ENCODE measurements at regions of chr13 and their contacts with region 1.

Region 1: DNA sequence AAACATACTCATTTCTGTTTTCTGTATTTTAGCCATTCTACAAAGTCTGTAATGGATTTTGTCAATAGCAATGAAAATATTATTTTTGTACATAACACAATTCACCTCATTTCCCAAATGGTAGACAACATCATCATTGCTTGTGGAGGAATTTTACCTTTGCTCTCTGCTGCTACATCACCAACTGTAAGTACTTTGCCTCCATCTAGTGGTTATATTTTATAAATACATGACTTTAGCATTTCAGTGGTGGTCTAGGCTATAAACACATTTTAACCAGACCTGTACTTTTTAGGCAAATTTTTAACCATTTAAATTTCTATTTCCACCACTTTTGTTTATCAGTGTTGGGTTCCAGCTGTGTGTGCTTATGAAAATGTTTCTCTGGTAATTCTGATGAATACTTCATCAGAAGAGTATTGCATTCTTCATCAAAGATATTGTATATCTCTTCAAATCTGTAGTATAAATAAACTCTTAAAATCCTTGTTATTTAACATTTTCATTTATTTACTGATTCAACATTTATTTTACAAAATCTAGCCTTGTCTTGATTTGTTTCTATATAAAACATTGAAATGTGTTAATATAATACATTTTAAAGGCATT is 222.4 kb downstream of the NBEA start:
- DNase-seq: no peak
- H3K4me3 Mint-ChIP-seq: no peak overlapping the region
- H3K27ac Mint-ChIP-seq: no peak overlapping the region
- H3K4me1 Mint-ChIP-seq: peaks cover 6% of the 10 kb centered on the region
- H3K27me3 Mint-ChIP-seq: no peaks in the 10 kb centered on the region

Region 2: DNA sequence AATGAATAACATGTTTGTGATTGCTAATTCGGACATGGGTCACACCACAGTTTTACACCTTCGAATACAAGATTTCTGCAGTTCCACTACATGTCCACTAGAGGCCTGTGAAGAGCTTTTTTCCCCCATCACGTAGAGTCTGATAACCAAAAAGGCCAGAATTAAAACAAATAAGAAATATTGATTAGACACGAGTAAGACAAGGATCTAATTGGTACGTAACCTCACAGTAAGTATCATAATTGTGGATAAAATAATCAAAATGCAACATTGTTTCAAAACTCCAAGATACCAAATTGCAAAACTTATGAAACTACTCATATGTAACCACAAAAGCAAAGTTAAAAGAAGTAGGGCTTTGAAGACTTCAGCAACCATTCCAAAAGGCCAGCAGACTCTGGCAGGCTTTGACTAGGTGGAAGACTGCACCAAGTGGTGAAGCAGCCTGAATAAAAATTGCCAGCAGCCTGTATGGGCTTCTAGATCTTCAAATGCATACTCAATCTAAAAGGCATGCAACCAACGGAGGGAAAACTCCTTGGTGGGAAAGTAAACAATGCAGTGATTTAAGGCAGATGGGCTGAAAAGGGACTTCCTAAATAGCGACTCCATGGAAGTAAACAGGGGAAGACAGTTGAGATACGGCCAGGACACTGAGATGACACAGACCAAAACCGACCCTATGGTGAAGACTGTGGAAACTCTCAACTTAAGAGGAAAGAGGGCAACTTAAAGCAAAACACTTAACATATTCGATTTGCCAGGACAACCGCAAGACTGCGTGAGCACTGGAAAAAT is 1935.6 kb before region 1 on chr13:
- CTCF ChIA-PET with region 1: no interaction called
- intact Hi-C with region 1: loop called (anchors 1 kb)
- DNase-seq: peak; percentile 24
- H3K4me3 Mint-ChIP-seq: no peak overlapping the region
- H3K27ac Mint-ChIP-seq: no peak overlapping the region
- H3K4me1 Mint-ChIP-seq: peaks cover 8% of the 10 kb centered on the region
- H3K27me3 Mint-ChIP-seq: peaks cover 12% of the 10 kb centered on the region

Region 3: DNA sequence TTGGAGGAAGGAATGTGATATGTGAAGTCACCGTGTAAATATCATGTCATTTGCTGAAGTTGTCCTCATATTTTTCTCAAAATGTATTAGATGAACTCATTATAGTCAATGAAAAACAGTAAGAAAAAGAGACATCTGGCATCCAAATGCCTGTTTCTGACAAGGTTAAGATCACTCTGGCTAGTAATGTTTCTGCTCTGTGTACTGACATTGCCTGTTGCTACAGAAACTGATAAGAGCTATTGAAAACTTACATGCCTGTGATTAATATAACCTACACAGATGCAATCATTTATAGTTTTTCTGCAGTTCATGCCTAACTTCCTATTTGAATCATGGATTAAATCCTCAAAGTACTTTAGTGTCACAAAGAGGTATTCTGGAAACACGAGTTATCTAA is 27.5 kb after region 1 on chr13:
- CTCF ChIA-PET with region 1: no interaction called
- intact Hi-C with region 1: no loop called
- DNase-seq: no peak
- H3K4me3 Mint-ChIP-seq: no peak overlapping the region
- H3K27ac Mint-ChIP-seq: no peak overlapping the region
- H3K4me1 Mint-ChIP-seq: no peaks in the 10 kb centered on the region
- H3K27me3 Mint-ChIP-seq: no peaks in the 10 kb centered on the region

Measured in activated naive CD4-positive, alpha-beta T cell treated with anti-CD3 and anti-CD28 coated beads for 36 hours (primary cell).